ENCODE measurements at regions of chr1 and their contacts with region 1.

Region 1: GRCh38 chr1:10941891-10942541 is 70.4 kb upstream of the TARDBP start:
- DNase-seq: no peak
- H3K4me3 ChIP-seq: no peak overlapping the region
- H3K27ac ChIP-seq: no peak overlapping the region
- H3K4me1 ChIP-seq: peaks cover 4% of the 10 kb centered on the region
- H3K27me3 ChIP-seq: no peaks in the 10 kb centered on the region
- CTCF ChIP-seq: peak; percentile 84 to 96

Region 2: DNA sequence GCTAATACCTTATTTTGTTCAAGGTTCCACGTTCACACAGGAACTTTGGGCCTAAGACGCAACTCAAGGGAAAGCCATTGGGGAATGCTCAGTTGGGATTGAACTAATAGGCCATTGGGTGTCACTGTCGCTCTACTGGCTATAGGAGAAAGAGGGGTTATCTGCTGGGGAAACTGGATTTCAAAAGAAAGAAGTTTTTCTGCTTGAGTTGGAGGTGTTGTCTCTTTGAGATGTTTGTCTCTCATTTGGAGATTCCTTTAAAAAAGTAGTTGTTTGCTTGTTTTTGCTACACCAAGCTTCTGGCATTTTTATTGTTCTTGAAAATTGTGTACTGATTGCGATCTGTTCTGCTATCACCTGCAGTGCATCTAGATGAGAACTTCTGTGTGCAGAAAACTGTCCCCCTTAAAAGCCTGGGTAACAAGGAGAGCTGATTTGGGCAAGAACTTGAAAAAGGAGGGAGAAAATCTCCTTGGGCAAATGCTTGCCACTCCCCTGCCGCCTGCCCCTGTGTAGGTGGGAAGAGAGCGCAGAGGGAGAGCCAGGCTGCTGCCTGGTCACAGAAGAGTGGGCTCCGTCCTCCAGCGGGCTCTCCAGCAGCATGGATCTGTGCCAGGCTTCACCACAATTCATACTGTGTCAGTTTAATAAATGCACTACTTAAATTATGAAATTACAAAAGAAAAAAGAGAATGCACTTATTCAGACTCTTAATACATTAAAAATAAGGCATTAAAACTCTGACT is 427.4 kb before region 1 on chr1:
- CTCF ChIA-PET with region 1: no interaction called
- dilution Hi-C with region 1: no loop called
- in situ Hi-C with region 1: no loop called
- intact Hi-C with region 1: loop called (anchors 1 kb)
- DNase-seq: peak; percentile 40
- H3K4me3 ChIP-seq: no peak overlapping the region
- H3K27ac ChIP-seq: no peak overlapping the region
- H3K4me1 ChIP-seq: peaks cover 55% of the 10 kb centered on the region
- H3K27me3 ChIP-seq: no peaks in the 10 kb centered on the region
- CTCF ChIP-seq: peak; percentile 63 to 64

Region 3: GRCh38 chr1:10561955-10562354 is 380.1 kb before region 1 on chr1:
- CTCF ChIA-PET with region 1: interaction called, 11 read pairs
- dilution Hi-C with region 1: no loop called
- in situ Hi-C with region 1: no loop called
- intact Hi-C with region 1: no loop called
- DNase-seq: peak; percentile 5
- H3K4me3 ChIP-seq: no peak overlapping the region
- H3K27ac ChIP-seq: peak overlapping the region; percentile 67
- H3K4me1 ChIP-seq: peaks cover 5% of the 10 kb centered on the region
- H3K27me3 ChIP-seq: no peaks in the 10 kb centered on the region
- CTCF ChIP-seq: peak; percentile 22 to 44

Region 4: DNA sequence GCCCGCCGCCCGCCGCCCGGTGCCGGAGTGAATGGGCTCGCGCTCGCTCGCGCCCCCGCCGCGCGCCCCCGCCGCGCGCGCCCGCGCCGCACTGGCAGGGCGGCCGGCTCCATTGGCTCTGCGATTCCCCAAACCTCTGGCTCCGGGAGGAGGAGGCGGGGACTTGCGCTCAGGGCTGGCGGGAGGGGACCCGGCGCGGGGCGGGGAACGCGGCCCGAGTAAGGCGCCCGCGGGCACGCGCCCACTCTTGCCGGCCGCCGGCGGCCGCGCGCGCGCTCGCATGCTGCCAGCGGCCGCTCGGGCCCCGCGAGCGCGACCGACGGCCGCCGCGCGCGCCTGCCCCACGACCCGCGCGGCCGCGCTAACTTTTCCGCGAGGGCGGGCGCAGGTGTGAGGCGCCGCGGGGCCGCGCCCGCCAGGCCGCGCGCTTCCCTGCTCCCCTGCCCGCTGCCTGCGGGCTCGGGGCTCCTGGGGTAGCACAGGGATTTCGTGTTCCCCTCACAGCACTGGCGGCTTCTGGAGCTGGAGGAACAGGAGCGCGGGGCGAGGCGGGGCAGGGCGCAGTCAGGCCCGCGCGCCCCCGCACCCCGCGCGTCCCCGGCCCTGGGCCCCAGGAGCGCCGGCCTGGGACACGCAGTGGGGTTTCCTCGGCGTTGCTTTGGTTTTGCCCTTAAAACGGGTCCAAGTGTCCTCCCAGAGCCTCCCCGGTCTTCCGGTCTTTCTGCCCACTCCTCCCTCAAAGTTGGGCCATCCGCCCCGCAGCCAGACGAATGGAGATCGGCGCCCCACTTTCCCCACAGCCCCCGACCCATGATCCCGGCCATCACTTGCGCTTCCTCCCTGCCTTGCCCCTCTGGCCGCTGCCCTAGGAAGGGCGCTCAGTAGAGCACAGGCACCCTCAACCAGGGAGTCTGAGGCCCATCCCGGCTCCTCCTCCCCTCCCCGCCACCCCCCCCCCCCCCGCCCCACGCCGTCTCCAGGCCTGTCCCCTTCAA is 247.1 kb before region 1 on chr1:
- CTCF ChIA-PET with region 1: no interaction called
- dilution Hi-C with region 1: no loop called
- in situ Hi-C with region 1: no loop called
- intact Hi-C with region 1: loop called (anchors 10 kb)
- DNase-seq: peak; percentile 78
- H3K4me3 ChIP-seq: peak overlapping the region in 2 of 3 experiments; percentile 42 to 53
- H3K27ac ChIP-seq: no peak overlapping the region
- H3K4me1 ChIP-seq: peaks cover 16% of the 10 kb centered on the region
- H3K27me3 ChIP-seq: no peaks in the 10 kb centered on the region
- CTCF ChIP-seq: no peak

Region 5: DNA sequence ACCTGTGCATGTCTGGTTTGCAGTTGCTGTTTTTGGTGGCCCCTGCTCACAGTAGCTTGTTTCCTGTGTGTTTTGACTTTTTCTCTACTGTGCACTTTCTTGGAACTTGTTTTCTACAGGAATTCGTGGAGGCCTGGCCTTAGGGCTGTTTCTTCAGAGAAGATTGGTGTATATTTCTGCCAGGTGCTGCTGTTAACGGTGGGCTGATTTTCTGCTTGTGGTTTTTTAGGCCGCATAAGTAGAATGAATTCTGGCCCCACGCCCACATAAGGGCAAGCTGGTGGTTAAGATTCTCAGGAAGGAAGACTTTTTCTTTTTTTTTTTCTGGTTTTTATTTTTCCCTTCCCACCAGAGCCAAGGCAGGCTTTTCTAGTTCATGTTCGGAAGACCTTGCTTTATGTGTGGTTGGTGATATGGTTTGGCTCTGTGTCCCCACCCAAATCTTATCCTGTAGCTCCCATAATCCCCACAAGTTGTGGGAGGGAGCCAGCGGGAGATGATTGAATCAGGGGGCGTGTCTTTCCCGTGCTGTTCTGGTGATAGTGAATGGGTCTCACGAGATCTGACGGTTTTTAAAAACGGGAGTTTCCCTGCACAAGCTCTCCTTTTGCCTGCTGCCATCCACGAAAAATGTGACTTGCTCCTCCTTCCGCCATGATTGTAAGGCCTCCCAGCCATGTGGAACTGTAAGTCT is 465.4 kb after region 1 on chr1:
- CTCF ChIA-PET with region 1: no interaction called
- dilution Hi-C with region 1: no loop called
- in situ Hi-C with region 1: no loop called
- intact Hi-C with region 1: no loop called
- DNase-seq: peak; percentile 5
- H3K4me3 ChIP-seq: no peak overlapping the region
- H3K27ac ChIP-seq: no peak overlapping the region
- H3K4me1 ChIP-seq: no peaks in the 10 kb centered on the region
- H3K27me3 ChIP-seq: peaks cover 2% of the 10 kb centered on the region
- CTCF ChIP-seq: no peak